Activated CD4-positive, alpha-beta T cell treated with anti-CD3 and anti-CD28 coated beads, Interleukin-2, amount 10 ng/mL, durations not matched to agents 24 days and 14 days (primary cell): ENCODE measurements at regions of chr3 and their contacts with region 1.

Region 1: DNA sequence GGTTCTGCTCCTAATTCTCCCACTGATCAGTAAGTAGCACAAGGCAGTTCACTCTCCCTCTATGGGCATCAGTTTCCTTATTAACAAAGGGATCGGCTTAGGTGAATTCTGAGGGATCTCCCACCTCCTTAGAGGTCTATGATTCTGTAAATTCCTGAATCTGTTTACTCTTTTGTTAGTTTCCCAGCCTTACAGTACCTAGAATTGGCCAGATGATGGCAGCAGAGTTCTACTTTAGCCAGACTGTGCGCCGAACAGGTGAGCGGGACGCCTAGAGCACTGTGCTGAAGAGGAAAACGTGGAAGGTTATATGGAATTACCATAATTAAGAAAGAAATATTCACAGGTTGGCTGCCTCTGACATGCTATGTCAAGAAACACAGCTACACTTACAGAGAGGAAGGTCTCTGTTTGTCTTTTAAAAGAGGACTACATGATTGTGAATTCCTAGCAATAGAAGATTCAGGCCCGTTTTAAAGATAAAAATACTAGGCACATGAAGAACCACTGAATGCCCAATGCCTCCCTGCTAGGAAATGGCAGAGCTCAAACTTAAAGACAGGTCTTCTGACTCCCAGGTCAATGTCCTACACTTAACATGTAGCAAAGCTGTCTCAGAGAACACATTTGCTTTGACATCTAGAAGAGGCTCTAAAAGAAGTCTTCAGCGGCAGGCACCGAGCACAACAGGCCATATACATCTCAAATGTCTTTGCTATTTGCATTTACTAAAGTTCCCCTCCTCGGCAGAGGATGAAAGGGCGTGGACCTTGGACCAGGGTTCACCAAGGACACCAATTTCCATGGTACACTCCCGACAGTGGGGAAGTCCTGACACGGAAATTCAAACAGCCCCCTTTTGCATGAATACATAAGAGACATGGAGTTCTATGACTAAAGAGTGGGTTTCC is 259.9 kb downstream of the FGF12 start:
- DNase-seq: peak; percentile 83
- H3K4me3 Mint-ChIP-seq: no peak overlapping the region
- H3K27ac Mint-ChIP-seq: no peak overlapping the region
- H3K4me1 Mint-ChIP-seq: no peaks in the 10 kb centered on the region
- H3K27me3 Mint-ChIP-seq: peaks cover 13% of the 10 kb centered on the region

Region 2: GRCh38 chr3:191809326-191809949 is 658.0 kb before region 1 on chr3:
- intact Hi-C with region 1: no loop called
- DNase-seq: no peak
- H3K4me3 Mint-ChIP-seq: no peak overlapping the region
- H3K27ac Mint-ChIP-seq: no peak overlapping the region
- H3K4me1 Mint-ChIP-seq: no peaks in the 10 kb centered on the region
- H3K27me3 Mint-ChIP-seq: no peaks in the 10 kb centered on the region

Region 3: GRCh38 chr3:192802957-192803899 is 335.7 kb after region 1 on chr3:
- intact Hi-C with region 1: loop called (anchors 2 kb)
- DNase-seq: no peak
- H3K4me3 Mint-ChIP-seq: no peak overlapping the region
- H3K27ac Mint-ChIP-seq: no peak overlapping the region
- H3K4me1 Mint-ChIP-seq: peaks cover 6% of the 10 kb centered on the region
- H3K27me3 Mint-ChIP-seq: no peaks in the 10 kb centered on the region

Region 4: DNA sequence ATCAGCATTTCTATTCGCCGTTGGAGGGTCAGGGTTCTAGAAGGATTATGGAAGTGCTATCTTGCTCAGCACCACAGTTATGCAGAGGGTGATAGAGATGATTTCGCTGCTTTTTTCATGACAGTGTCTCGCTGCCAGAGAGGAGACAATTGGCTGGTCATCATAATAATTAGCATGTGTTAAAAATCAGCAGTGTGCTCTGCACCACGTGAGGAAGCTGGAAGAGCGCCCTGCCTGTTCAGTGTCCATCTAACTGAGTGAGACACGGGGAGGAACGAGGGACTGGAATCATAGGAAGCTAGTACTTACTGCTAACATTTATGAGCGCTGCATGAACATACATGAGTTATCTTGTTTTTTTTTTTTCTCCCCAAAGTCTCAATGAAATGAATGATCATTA is 657.4 kb after region 1 on chr3:
- intact Hi-C with region 1: no loop called
- DNase-seq: no peak
- H3K4me3 Mint-ChIP-seq: no peak overlapping the region
- H3K27ac Mint-ChIP-seq: no peak overlapping the region
- H3K4me1 Mint-ChIP-seq: no peaks in the 10 kb centered on the region
- H3K27me3 Mint-ChIP-seq: peaks cover 5% of the 10 kb centered on the region